ENCODE measurements at regions of chr19 and their contacts with region 1.

Region 1: DNA sequence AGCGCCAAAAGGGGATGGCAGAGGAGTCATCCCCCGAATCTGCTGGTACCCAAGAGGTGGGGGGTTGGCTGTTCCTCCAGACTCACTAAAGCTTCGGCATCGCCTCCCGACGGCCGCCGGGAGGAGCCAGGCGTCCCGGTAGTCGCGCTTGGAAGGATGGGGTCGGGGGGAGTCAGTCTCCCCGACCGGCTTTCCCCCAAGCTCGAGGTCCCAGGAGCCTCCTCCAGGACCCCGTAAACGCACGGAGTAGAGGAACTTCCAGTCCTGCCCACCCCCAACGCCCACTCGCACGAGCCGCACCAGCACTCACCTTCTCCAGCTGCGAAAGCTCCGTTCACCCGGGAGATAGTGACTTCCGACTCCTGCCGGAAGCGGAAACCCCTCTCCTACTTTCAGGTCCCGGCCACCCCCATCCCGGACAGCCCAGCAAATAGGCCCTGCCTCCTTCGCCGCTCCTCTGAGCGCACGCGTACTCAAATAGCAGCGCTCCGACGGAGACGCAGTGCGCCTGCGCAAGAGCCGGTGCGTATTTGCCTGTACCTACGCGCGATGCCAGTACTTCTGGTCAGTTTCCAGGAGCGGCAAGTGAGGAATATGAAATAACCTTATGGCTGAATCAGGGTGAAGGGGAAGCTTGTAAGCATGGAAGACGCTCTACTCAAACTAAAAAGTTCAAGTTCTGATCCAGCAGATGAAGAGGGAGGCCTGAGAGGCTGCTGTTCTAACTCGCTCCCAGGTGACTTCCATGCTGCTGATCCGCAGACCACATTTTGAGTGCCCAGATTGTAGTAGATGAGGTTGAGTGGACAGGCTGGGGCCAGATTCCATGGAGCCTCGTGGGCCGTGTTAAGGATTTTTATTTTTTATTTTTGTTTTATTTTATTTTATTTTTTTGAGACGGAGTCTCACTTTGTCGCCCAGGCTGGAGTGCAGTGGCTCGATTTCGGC is at the start of gene ELOF1:
- DNase-seq: peak; percentile 90 to 99 (median 97)
- ATAC-seq: peak; percentile 94
- H3K4me3 ChIP-seq: peak within 1 kb of the TSS; percentile 83 to 87
- H3K4me3 Mint-ChIP-seq: peak within 1 kb of the TSS; percentile 93
- H3K27ac ChIP-seq: peak within 1 kb of the TSS; percentile 74 to 78
- H3K27ac Mint-ChIP-seq: peak within 1 kb of the TSS; percentile 93
- H3K4me1 ChIP-seq: peaks cover 29% of the 10 kb centered on the region
- H3K4me1 Mint-ChIP-seq: peaks cover 39% of the 10 kb centered on the region
- H3K27me3 ChIP-seq: no peaks in the 10 kb centered on the region
- H3K27me3 Mint-ChIP-seq: no peaks in the 10 kb centered on the region
- CTCF ChIP-seq: no peak
- total RNA-seq, gene ELOF1: 40.3 to 41.0 TPM

Region 2: DNA sequence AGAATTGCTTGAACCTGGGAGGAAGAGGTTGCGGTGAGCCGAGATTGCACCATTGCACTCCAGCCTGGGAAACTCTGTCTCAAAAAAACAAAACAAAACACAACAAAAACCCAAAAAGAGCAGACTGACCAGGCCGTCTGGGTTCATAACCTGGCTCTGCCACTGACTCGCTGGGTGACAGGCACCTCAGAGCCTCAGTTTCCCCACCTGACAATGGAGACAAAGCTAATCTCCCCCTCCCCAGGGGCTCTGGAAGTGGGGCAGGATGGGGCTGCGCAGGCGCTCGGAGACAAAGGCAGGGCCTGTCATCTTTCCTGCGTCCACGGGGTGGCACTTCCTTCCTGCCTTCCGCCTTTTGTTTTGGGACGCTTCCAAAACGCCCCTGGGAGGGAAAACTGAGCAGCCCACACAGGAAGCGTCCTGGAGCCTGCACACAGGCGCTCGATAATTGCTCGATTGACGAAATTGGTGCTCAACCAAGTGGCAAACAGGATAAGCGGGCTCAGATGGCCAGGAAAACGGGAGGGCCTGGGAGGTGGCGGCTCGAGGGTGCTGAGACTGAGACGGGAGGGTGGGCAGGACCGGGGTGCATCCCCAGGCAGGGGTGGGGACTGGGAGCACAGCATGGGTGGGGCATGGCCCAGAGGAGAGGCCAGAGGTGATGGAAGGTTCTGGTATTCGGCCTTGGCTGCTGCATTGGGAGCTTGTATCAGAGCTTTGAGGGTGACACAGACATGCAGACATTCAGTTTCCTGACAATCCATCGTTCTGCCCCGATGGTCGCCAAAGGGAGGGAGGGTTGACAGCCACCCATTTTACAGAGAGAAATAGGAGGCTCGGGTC is 421.4 kb before region 1 on chr19:
- CTCF ChIA-PET with region 1: no interaction called
- POLR2A ChIA-PET with region 1: no interaction called
- intact Hi-C with region 1: no loop called
- DNase-seq: peak in 8 of 9 experiments; percentile 18 to 80 (median 58)
- ATAC-seq: peak; percentile 82
- H3K4me3 ChIP-seq: peak overlapping the region; percentile 48 to 57
- H3K4me3 Mint-ChIP-seq: peak overlapping the region; percentile 84
- H3K27ac ChIP-seq: no peak overlapping the region
- H3K27ac Mint-ChIP-seq: no peak overlapping the region
- H3K4me1 ChIP-seq: peaks cover 13% of the 10 kb centered on the region
- H3K4me1 Mint-ChIP-seq: peaks cover 10% of the 10 kb centered on the region
- H3K27me3 ChIP-seq: no peaks in the 10 kb centered on the region
- H3K27me3 Mint-ChIP-seq: no peaks in the 10 kb centered on the region
- CTCF ChIP-seq: peak; percentile 55

Region 3: GRCh38 chr19:11405846-11406643 is 153.1 kb before region 1 on chr19:
- CTCF ChIA-PET with region 1: no interaction called
- POLR2A ChIA-PET with region 1: no interaction called
- intact Hi-C with region 1: no loop called
- DNase-seq: peak in 3 of 9 experiments; percentile 36 to 46 (median 40)
- ATAC-seq: peak; percentile 23
- H3K4me3 ChIP-seq: no peak overlapping the region
- H3K4me3 Mint-ChIP-seq: no peak overlapping the region
- H3K27ac ChIP-seq: no peak overlapping the region
- H3K27ac Mint-ChIP-seq: no peak overlapping the region
- H3K4me1 ChIP-seq: peaks cover 4% of the 10 kb centered on the region
- H3K4me1 Mint-ChIP-seq: no peaks in the 10 kb centered on the region
- H3K27me3 ChIP-seq: peaks cover 0 to 2% of the 10 kb centered on the region in 2 experiments
- H3K27me3 Mint-ChIP-seq: peaks cover 15% of the 10 kb centered on the region
- CTCF ChIP-seq: no peak

Region 4: GRCh38 chr19:11496391-11497163 is 62.6 kb before region 1 on chr19:
- CTCF ChIA-PET with region 1: no interaction called
- POLR2A ChIA-PET with region 1: no interaction called
- intact Hi-C with region 1: no loop called
- DNase-seq: peak; percentile 18 to 70 (median 61)
- ATAC-seq: peak; percentile 69
- H3K4me3 ChIP-seq: no peak overlapping the region
- H3K4me3 Mint-ChIP-seq: no peak overlapping the region
- H3K27ac ChIP-seq: no peak overlapping the region
- H3K27ac Mint-ChIP-seq: no peak overlapping the region
- H3K4me1 ChIP-seq: no peaks in the 10 kb centered on the region
- H3K4me1 Mint-ChIP-seq: no peaks in the 10 kb centered on the region
- H3K27me3 ChIP-seq: no peaks in the 10 kb centered on the region
- H3K27me3 Mint-ChIP-seq: no peaks in the 10 kb centered on the region
- CTCF ChIP-seq: peak; percentile 63

Region 5: GRCh38 chr19:11528551-11529341 is 30.4 kb before region 1 on chr19 and contains the start of gene ECSIT:
- CTCF ChIA-PET with region 1: interaction called, 5 read pairs
- POLR2A ChIA-PET with region 1: no interaction called
- intact Hi-C with region 1: loop called (anchors 1 kb)
- DNase-seq: peak; percentile 83 to 96 (median 91)
- ATAC-seq: peak; percentile 98
- H3K4me3 ChIP-seq: peak within 1 kb of the TSS; percentile 85 to 92
- H3K4me3 Mint-ChIP-seq: peak within 1 kb of the TSS; percentile 97
- H3K27ac ChIP-seq: peak within 1 kb of the TSS; percentile 62 to 89
- H3K27ac Mint-ChIP-seq: peak within 1 kb of the TSS; percentile 96
- H3K4me1 ChIP-seq: peaks cover 19% of the 10 kb centered on the region
- H3K4me1 Mint-ChIP-seq: peaks cover 16% of the 10 kb centered on the region
- H3K27me3 ChIP-seq: no peaks in the 10 kb centered on the region
- H3K27me3 Mint-ChIP-seq: no peaks in the 10 kb centered on the region
- CTCF ChIP-seq: no peak
- total RNA-seq, gene ECSIT: 31.1 to 32.4 TPM

Region 6: DNA sequence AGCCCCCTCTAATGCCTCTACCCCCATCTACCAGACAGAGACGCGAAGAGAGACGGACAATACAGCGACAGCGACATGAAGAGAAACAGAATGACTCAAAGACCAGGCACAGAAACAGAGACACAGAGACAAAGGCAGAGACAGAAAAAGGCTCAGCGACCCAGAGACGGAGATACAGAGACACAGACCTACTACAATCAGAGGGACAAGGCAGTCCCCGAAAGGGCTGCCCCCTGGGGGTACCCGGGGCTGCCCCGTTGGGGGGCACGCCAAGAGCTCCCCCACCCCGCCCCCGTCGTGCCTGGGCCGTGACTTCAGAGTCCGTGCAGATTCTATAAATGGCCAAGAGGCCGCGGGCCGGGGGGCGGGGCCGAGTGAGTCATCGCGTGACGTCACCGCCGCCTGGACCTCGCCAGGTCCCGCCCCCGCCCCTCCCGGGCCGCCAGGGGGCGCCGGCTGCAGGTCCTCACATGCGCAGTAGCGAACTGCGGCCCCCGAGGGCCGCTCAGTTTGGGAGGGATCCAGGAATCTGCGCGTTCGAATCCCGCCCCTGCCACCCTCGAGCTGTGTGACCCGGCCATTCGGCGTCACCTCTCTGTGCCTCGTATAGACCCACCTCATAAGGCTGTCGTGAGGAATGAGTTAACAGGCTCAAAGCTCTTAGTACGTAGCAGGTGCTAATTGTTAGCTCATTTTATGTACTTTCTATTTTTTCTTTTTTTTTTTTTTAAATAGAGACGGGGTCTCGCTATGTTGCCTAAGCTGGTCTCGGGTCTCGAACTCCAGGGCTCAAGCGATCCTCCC is 23.2 kb before region 1 on chr19:
- CTCF ChIA-PET with region 1: interaction called, 7 read pairs
- POLR2A ChIA-PET with region 1: no interaction called
- intact Hi-C with region 1: loop called (anchors 2 kb)
- DNase-seq: peak; percentile 70 to 91 (median 77)
- ATAC-seq: peak; percentile 87
- H3K4me3 ChIP-seq: peak overlapping the region; percentile 23 to 44
- H3K4me3 Mint-ChIP-seq: peak overlapping the region; percentile 66
- H3K27ac ChIP-seq: peak overlapping the region in 1 of 2 experiments; percentile 76
- H3K27ac Mint-ChIP-seq: peak overlapping the region; percentile 74
- H3K4me1 ChIP-seq: peaks cover 11% of the 10 kb centered on the region
- H3K4me1 Mint-ChIP-seq: peaks cover 8% of the 10 kb centered on the region
- H3K27me3 ChIP-seq: peaks cover 8 to 12% of the 10 kb centered on the region in 2 experiments
- H3K27me3 Mint-ChIP-seq: peaks cover 12% of the 10 kb centered on the region
- CTCF ChIP-seq: peak; percentile 78

Region 7: DNA sequence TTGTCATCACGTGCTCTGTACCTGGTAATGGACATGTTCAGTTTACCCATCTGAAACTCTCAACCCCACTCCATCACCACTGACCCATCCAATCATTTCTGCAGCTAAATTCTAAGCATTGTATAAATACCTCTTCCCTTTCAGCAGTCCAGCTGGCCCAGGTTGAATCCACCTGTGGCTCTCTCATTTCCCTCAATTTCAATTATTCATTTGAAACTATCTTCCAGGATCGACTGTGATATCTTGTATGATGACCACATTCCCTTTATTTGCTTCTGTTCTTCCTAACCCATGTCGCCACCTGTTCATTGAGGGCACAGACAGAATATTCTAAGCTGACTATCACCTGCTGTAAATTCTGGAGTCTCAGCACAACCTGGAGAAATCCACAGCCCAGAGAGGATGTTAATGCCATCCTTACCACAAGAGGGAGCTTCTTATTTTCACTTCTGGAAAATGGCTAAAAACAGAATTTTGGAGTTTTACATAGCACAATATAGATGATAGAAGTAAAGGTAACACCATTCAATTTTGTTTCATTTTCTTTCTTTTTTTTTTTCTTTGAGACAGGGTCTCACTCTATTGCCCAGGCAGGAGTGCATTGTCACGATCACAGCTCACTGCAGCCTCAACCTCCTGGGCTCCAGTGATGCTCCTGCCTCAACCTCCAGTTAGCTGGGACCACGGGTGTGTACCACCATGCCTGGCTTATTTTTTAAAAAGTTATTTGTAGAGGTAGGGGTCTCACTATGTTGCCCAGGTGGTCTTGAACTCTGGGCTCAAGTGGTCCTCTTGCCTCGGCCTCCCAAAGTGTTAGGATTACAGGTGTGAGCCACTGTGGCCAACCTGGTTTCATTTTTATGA is 141.0 kb after region 1 on chr19:
- CTCF ChIA-PET with region 1: no interaction called
- POLR2A ChIA-PET with region 1: no interaction called
- intact Hi-C with region 1: loop called (anchors 2 kb)
- DNase-seq: peak in 3 of 9 experiments; percentile 5 to 48 (median 32)
- ATAC-seq: no peak
- H3K4me3 ChIP-seq: no peak overlapping the region
- H3K4me3 Mint-ChIP-seq: no peak overlapping the region
- H3K27ac ChIP-seq: no peak overlapping the region
- H3K27ac Mint-ChIP-seq: no peak overlapping the region
- H3K4me1 ChIP-seq: peaks cover 1% of the 10 kb centered on the region
- H3K4me1 Mint-ChIP-seq: no peaks in the 10 kb centered on the region
- H3K27me3 ChIP-seq: peaks cover 0 to 2% of the 10 kb centered on the region in 2 experiments
- H3K27me3 Mint-ChIP-seq: peaks cover 8% of the 10 kb centered on the region
- CTCF ChIP-seq: peak; percentile 69

Region 8: DNA sequence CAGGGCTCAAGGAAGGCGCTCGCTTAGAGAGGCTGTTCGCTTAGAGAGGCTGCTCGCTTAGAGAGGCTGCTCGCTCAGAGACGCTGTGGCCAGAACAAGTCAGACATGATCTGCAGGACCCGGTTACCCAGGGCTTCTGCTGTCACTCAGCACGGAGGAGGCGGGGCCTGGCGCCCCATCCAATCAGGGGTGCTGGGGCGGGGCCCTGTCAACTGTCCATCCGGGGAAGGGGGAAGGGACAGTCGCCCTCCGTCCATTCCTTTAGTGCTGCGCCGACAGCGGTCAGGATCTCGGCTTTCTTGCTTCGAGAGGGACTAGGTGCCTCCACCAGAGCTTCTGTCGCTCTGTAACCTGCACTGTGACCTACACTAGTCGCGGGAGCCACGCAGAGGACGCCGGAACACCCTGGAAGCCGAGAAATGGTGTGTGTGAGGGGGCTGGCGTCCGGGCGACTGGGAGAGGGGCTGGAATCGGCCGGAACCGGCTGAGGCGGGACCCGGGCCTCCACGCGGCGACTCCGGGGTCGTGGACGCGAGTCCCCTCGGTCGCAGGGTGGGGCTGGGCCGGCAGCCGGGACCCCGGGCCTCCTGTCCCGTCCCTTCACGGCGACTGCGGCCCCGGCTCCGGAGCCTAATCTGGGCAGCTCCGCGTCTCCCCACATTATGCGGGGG is 255.0 kb after region 1 on chr19 and contains the start of gene ZNF440:
- CTCF ChIA-PET with region 1: no interaction called
- POLR2A ChIA-PET with region 1: no interaction called
- intact Hi-C with region 1: loop called in 1 of 2 experiments (anchors 5 kb)
- DNase-seq: peak; percentile 66 to 88 (median 79)
- ATAC-seq: peak; percentile 99
- H3K4me3 ChIP-seq: peak within 1 kb of the TSS; percentile 89 to 95
- H3K4me3 Mint-ChIP-seq: peak within 1 kb of the TSS; percentile 95
- H3K27ac ChIP-seq: peak within 1 kb of the TSS; percentile 45 to 51
- H3K27ac Mint-ChIP-seq: peak within 1 kb of the TSS; percentile 86
- H3K4me1 ChIP-seq: peaks cover 6% of the 10 kb centered on the region
- H3K4me1 Mint-ChIP-seq: peaks cover 32% of the 10 kb centered on the region
- H3K27me3 ChIP-seq: no peaks in the 10 kb centered on the region
- H3K27me3 Mint-ChIP-seq: no peaks in the 10 kb centered on the region
- CTCF ChIP-seq: no peak
- total RNA-seq, gene ZNF440: 6.4 to 7.9 TPM

Measured in CD8-positive, alpha-beta T cell (primary cell).